Dendritic cell treated with granulocyte-macrophage colony-stimulating factor and Interleukin-4, amounts not matched to agents 40 ng/mL and 50 ng/mL, for 4 days (primary cell): ENCODE measurements at regions of chr4 and their contacts with region 1.

Region 1: GRCh38 chr4:75968084-75968483 is 22.7 kb downstream of the SDAD1 start:
- H3K4me3 Mint-ChIP-seq: no peak overlapping the region
- H3K27ac Mint-ChIP-seq: no peak overlapping the region
- H3K4me1 Mint-ChIP-seq: peaks cover 6% of the 10 kb centered on the region
- H3K27me3 Mint-ChIP-seq: no peaks in the 10 kb centered on the region

Region 2: GRCh38 chr4:75919920-75920319 is 48.2 kb before region 1 on chr4:
- intact Hi-C with region 1: loop called (anchors 5 kb)
- H3K4me3 Mint-ChIP-seq: no peak overlapping the region
- H3K27ac Mint-ChIP-seq: no peak overlapping the region
- H3K4me1 Mint-ChIP-seq: no peaks in the 10 kb centered on the region
- H3K27me3 Mint-ChIP-seq: no peaks in the 10 kb centered on the region

Region 3: GRCh38 chr4:76108467-76109181 is 140.5 kb after region 1 on chr4:
- intact Hi-C with region 1: no loop called
- H3K4me3 Mint-ChIP-seq: no peak overlapping the region
- H3K27ac Mint-ChIP-seq: no peak overlapping the region
- H3K4me1 Mint-ChIP-seq: no peaks in the 10 kb centered on the region
- H3K27me3 Mint-ChIP-seq: no peaks in the 10 kb centered on the region